ENCODE measurements at regions of chr16 and their contacts with region 1.

Region 1: GRCh38 chr16:57413301-57413730 is 8.7 kb downstream of the CCL17 start:
- DNase-seq: no peak
- H3K4me3 ChIP-seq: no peak overlapping the region
- H3K27ac ChIP-seq: no peak overlapping the region
- H3K4me1 ChIP-seq: no peaks in the 10 kb centered on the region
- H3K27me3 ChIP-seq: no peaks in the 10 kb centered on the region
- CTCF ChIP-seq: no peak
- POLR2A ChIP-seq: no peak

Region 2: GRCh38 chr16:56911771-56912571 is 501.3 kb before region 1 on chr16:
- intact Hi-C with region 1: no loop called
- DNase-seq: no peak
- H3K4me3 ChIP-seq: no peak overlapping the region
- H3K27ac ChIP-seq: peak overlapping the region in 1 of 2 donors; percentile 94
- H3K4me1 ChIP-seq: peaks cover 49% of the 10 kb centered on the region
- H3K27me3 ChIP-seq: no peaks in the 10 kb centered on the region
- CTCF ChIP-seq: no peak
- POLR2A ChIP-seq: no peak

Region 3: DNA sequence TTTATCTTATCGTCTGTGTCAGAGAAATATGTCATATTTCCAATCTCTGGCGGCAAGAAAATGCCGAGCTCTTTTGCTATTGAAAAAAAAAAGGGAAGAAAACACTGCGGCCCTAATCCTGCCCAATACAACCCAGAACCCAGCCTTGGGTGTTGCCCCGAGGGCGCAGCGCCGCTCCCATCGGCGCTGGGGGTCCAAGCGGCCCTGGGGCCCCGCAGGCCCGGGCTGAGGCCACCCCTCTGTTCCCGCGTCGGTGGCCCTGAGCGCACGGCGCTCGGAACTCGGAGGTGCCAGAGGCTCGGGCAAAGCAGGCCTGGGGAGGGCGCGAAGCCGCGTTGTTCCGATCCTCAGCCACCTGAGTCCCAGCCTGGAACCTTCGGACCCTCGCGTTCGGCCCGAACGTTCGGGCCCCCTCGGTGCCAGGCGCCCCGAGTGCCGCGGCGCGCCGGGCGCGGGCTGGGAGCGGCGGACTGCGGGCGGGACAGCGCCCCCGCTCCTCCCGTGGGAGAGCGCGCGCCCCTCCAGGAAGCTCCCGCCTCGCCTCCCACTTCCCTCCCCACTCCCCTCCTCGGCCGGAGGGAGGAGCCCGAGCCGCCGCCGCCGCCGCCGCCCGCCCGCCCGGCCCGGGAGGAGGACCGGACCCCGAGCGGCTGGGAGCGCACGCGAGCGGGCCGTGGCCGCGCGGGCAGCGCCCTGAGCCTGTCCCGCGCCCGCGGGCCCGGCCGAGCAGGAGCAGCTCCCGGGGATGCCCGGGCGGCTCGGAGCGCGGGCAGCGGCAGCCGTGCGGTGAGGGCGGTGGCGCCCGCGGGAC is 321.1 kb before region 1 on chr16 and contains the start of gene CPNE2:
- intact Hi-C with region 1: loop called (anchors 5 kb)
- DNase-seq: peak; percentile 54
- H3K4me3 ChIP-seq: peak within 1 kb of the TSS; percentile 76 to 87
- H3K27ac ChIP-seq: peak within 1 kb of the TSS; percentile 73 to 75
- H3K4me1 ChIP-seq: peaks cover 6% of the 10 kb centered on the region
- H3K27me3 ChIP-seq: no peaks in the 10 kb centered on the region
- CTCF ChIP-seq: peak in 2 of 4 experiments; percentile 15 to 21
- POLR2A ChIP-seq: no peak
- total RNA-seq, gene CPNE2: 22.3 to 23.3 TPM

Region 4: DNA sequence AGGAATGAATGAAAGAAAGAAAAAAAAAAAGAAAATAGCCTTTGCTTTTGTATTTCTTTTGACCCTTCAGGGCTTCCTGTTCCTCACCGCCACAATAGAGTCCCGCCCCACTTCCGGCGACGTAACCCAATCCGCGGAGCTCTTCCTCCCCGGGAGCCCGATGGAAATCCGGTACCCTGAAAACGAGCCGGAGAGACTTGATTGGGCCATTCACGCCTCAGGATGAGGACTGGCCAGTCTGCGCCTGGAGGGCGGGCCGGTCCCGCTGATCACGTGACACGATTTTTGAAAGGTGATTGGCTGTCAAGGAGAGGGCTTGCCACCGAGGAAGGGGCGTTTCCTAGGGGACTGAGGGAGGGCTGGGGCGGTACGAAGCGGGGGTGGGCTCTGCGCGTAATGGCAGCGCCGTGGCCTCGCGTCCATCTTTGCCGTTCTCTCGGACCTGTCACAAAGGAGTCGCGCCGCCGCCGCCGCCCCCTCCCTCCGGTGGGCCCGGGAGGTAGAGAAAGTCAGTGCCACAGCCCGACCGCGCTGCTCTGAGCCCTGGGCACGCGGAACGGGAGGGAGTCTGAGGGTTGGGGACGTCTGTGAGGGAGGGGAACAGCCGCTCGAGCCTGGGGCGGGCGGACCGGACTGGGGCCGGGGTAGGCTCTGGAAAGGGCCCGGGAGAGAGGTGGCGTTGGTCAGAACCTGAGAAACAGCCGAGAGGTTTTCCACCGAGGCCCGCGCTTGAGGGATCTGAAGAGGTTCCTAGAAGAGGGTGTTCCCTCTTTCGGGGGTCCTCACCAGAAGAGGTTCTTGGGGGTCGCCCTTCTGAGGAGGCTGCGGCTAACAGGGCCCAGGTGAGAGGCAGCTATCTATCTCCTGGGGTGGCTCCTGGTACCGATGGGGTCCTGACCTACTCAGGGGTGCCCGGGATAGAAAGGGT is 227.1 kb before region 1 on chr16 and contains the starts of genes PSME3IP1 and RSPRY1:
- intact Hi-C with region 1: loop called (anchors 10 kb)
- DNase-seq: peak; percentile 99
- H3K4me3 ChIP-seq: peak within 1 kb of the TSS; percentile 71 to 76
- H3K27ac ChIP-seq: peak within 1 kb of the TSS; percentile 91 to 92
- H3K4me1 ChIP-seq: peaks cover 10% of the 10 kb centered on the region
- H3K27me3 ChIP-seq: no peaks in the 10 kb centered on the region
- CTCF ChIP-seq: no peak
- POLR2A ChIP-seq: peak; percentile 93
- total RNA-seq, gene PSME3IP1: 64.1 to 95.8 TPM
- total RNA-seq, gene RSPRY1: 35.8 to 45.3 TPM

Region 5: DNA sequence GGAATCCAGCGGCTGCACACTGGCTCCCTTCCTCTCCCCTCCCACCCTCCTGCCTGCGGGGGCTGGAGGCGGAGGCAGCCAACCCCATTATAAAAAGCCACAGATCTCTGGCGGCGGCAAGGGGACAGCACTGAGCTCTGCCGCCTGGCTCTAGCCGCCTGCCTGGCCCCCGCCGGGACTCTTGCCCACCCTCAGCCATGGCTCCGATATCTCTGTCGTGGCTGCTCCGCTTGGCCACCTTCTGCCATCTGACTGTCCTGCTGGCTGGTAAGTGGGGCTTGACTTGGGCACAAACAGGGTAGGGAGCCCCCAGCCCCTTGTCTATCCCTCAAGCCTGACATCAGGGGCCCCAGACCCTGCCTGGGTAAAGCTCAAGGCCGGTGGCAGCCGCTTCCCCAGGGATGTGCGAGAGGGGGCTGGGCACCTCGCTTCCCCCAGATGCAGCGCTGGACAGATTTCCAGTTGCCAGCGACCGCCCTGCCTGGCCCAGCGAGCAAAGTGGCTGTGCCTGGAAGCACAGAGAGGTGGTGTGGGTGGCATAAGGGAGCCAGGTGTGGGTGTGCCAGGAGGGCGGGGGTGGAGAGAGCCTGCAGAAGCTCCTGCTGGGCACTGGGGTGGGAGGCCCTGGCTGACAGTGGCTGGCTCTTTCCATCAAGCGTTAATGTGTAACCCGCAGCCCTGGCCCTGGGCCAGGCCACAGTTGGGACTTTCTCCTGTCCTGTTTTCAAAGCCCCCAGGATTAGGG is 40.8 kb before region 1 on chr16 and contains the start of gene CX3CL1:
- intact Hi-C with region 1: loop called (anchors 5 kb)
- DNase-seq: peak; percentile 85
- H3K4me3 ChIP-seq: peak within 1 kb of the TSS; percentile 52 to 53
- H3K27ac ChIP-seq: peak within 1 kb of the TSS; percentile 90
- H3K4me1 ChIP-seq: peaks cover 7% of the 10 kb centered on the region
- H3K27me3 ChIP-seq: no peaks in the 10 kb centered on the region
- CTCF ChIP-seq: peak in 2 of 4 experiments; percentile 25 to 35
- POLR2A ChIP-seq: peak; percentile 98
- total RNA-seq, gene CX3CL1: 30.2 to 52.6 TPM

Region 6: DNA sequence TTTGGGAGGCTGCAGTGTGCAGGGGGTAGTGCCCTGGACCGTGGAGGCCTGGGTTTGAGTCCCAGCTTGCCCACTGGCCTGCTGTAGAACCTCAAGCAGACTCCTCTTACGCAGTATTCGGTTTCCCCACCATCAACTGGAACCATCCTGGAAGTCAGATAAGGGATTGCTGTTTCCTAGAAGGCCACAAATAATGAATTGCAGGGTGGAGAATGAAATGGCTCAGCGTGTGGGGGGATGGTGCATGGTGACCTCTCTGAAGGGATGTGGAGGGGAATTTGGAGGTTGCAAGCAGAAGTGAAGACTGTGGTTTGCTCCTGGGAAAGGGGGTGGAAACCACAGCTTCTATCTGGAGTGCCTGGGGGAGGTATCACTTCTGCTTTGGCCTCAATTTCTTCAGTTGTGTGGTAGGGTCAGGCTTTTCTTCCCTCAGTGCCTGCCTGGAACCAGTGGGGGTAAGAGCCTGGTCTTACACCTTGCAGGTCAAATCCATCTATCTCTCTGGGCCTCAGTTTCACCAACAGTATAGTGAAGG is 130.9 kb after region 1 on chr16:
- intact Hi-C with region 1: no loop called
- DNase-seq: no peak
- H3K4me3 ChIP-seq: no peak overlapping the region
- H3K27ac ChIP-seq: no peak overlapping the region
- H3K4me1 ChIP-seq: no peaks in the 10 kb centered on the region
- H3K27me3 ChIP-seq: no peaks in the 10 kb centered on the region
- CTCF ChIP-seq: no peak
- POLR2A ChIP-seq: no peak